Motor neuron (in vitro differentiated cells): ENCODE measurements at regions of chr12 and their contacts with region 1.

Region 1: GRCh38 chr12:15856097-15856982 is 25.8 kb upstream of the STRAP start:
- ATAC-seq: peak in 4 of 8 experiments; percentile 35 to 80 (median 48)
- H3K4me3 ChIP-seq: no peak overlapping the region
- H3K27ac ChIP-seq: no peak overlapping the region
- H3K4me1 ChIP-seq: no peaks in the 10 kb centered on the region

Region 2: DNA sequence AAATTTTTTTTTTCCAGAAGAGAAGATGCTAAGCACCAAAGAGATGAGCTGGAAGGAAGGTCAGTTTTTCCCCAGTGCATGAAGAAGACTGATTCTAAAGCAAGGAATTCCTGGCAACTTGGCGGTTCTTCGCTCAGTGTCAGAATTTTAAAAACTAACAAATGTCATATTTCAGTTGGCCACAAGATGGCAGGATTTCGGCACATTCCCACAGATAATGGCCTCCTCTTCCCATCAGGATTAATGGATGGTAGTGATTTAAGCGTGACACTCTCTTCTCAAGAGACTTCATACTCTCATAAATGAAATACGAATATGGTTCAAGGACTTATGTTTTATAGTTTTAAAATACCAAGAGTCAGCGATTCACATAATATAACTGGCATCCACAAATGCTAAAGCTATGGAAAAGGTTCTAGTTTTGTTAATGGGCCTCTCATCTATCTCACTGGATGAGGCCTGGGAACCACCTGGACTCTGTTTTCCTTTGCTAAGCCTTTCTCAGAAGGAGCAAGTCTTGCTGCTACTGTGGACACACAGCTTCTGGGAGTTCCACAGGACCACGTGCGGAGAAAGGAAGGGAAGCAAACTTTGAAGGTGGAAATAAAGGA is 580.1 kb before region 1 on chr12:
- in situ Hi-C with region 1: loop called in 2 of 9 experiments (anchors 25 kb)
- ATAC-seq: peak; percentile 39 to 74 (median 58)
- H3K4me3 ChIP-seq: no peak overlapping the region
- H3K27ac ChIP-seq: no peak overlapping the region
- H3K4me1 ChIP-seq: no peaks in the 10 kb centered on the region

Region 3: DNA sequence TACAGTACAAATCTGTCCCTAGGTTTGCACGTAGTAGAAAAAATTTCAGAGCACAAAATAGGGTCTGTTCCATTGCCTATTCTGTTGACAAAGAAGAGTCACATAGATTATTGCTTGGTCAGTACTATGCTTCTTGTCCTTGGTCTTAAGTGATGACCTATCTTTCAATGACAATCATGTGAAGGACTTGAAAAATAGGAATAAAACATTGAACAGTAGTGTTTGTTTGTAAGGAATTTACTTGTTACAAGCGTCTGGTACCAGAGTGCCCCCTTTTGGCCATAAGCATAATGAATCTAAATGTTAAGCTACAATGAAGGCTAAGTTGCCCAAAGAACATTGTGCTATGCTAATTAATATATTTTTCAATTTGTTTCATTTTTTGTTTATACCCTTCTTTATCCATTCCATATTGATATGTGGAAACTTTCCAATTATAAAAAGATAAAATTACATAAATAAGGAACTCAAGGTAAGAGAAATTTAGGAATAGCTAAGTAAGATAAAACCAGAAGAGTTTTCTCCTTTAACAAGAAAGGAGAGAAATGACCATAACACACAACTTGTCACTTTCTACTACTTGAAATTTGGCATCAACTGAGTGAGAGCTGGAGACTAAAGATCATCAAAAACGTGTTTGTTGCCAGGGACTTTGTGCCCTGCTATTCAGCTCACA is 271.8 kb before region 1 on chr12:
- in situ Hi-C with region 1: loop called in 3 of 9 experiments (anchors 10 to 25 kb)
- ATAC-seq: peak in 3 of 8 experiments; percentile 42 to 64 (median 56)
- H3K4me3 ChIP-seq: no peak overlapping the region
- H3K27ac ChIP-seq: no peak overlapping the region
- H3K4me1 ChIP-seq: no peaks in the 10 kb centered on the region

Region 4: GRCh38 chr12:15590180-15590826 is 266.0 kb before region 1 on chr12:
- in situ Hi-C with region 1: loop called in 6 of 9 experiments (anchors 5 to 25 kb)
- ATAC-seq: peak; percentile 57 to 98 (median 72)
- H3K4me3 ChIP-seq: no peak overlapping the region
- H3K27ac ChIP-seq: no peak overlapping the region
- H3K4me1 ChIP-seq: no peaks in the 10 kb centered on the region

Region 5: GRCh38 chr12:15599266-15600037 is 256.9 kb before region 1 on chr12:
- in situ Hi-C with region 1: loop called in 5 of 9 experiments (anchors 5 to 25 kb)
- ATAC-seq: no peak
- H3K4me3 ChIP-seq: no peak overlapping the region
- H3K27ac ChIP-seq: no peak overlapping the region
- H3K4me1 ChIP-seq: peaks cover 0 to 5% of the 10 kb centered on the region in 2 donors